Naive thymus-derived CD4-positive, alpha-beta T cell (primary cell): ENCODE measurements at regions of chr16 and their contacts with region 1.

Region 1: DNA sequence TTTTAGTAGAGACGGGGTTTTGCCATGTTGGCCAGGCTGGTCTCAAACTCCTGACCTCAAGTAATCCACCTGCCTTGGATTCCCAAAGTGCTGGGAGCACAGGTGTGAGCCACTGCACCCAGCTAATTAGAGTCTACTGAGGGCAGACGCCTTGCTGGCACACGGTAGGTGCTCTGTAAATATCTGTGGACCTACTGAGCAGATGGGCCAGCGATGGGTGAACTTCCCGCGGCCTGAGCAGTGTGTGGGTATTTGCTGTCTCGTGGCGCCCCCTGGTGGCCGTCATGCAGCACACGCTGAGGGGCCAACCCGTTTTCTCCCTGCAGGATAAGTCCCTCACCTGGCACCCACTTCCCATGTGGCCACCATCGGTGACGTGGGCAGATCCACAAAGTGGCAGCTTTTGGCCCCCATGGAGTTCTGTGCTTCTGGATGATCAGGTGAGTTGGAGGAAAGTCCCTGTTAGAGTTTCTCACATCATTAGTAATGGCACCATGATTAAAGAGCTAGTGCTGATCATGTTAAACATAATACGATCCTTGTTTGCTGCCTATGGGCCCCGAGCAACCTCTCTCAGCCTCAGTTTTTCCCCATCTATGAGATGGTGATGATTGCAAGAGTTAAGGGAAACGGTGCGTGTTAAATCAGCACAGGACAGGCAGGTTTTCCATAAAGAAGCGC is 40.7 kb downstream of the ZDHHC7 start:
- DNase-seq: peak; percentile 60 to 79 (median 74)
- ATAC-seq: peak; percentile 92
- H3K4me3 ChIP-seq: no peak overlapping the region
- H3K4me3 Mint-ChIP-seq: no peak overlapping the region
- H3K27ac ChIP-seq: no peak overlapping the region
- H3K27ac Mint-ChIP-seq: peak overlapping the region in 3 of 9 donors; percentile 9 to 78 (median 46)
- H3K4me1 ChIP-seq: peaks cover 0 to 6% of the 10 kb centered on the region in 2 donors
- H3K4me1 Mint-ChIP-seq: peaks cover 0 to 8% (median 4%) of the 10 kb centered on the region in 7 donors
- H3K27me3 ChIP-seq: no peaks in the 10 kb centered on the region
- H3K27me3 Mint-ChIP-seq: no peaks in the 10 kb centered on the region

Region 2: GRCh38 chr16:84277237-84277823 is 693.3 kb before region 1 on chr16:
- CTCF ChIA-PET with region 1: no interaction called
- POLR2A ChIA-PET with region 1: no interaction called
- intact Hi-C with region 1: loop called in 1 of 2 experiments (anchors 1 kb)
- DNase-seq: peak; percentile 27 to 73 (median 58)
- ATAC-seq: peak; percentile 78
- H3K4me3 ChIP-seq: no peak overlapping the region
- H3K4me3 Mint-ChIP-seq: no peak overlapping the region
- H3K27ac ChIP-seq: no peak overlapping the region
- H3K27ac Mint-ChIP-seq: no peak overlapping the region
- H3K4me1 ChIP-seq: no peaks in the 10 kb centered on the region
- H3K4me1 Mint-ChIP-seq: no peaks in the 10 kb centered on the region
- H3K27me3 ChIP-seq: no peaks in the 10 kb centered on the region
- H3K27me3 Mint-ChIP-seq: peaks cover 0 to 10% (median 0%) of the 10 kb centered on the region in 5 donors

Region 3: GRCh38 chr16:84881702-84882521 is 88.7 kb before region 1 on chr16:
- CTCF ChIA-PET with region 1: no interaction called
- POLR2A ChIA-PET with region 1: no interaction called
- intact Hi-C with region 1: no loop called
- DNase-seq: no peak
- ATAC-seq: no peak
- H3K4me3 ChIP-seq: no peak overlapping the region
- H3K4me3 Mint-ChIP-seq: no peak overlapping the region
- H3K27ac ChIP-seq: no peak overlapping the region
- H3K27ac Mint-ChIP-seq: no peak overlapping the region
- H3K4me1 ChIP-seq: peaks cover 0 to 6% of the 10 kb centered on the region in 2 donors
- H3K4me1 Mint-ChIP-seq: peaks cover 0 to 8% (median 4%) of the 10 kb centered on the region in 7 donors
- H3K27me3 ChIP-seq: no peaks in the 10 kb centered on the region
- H3K27me3 Mint-ChIP-seq: peaks cover 0 to 15% (median 0%) of the 10 kb centered on the region in 5 donors

Region 4: DNA sequence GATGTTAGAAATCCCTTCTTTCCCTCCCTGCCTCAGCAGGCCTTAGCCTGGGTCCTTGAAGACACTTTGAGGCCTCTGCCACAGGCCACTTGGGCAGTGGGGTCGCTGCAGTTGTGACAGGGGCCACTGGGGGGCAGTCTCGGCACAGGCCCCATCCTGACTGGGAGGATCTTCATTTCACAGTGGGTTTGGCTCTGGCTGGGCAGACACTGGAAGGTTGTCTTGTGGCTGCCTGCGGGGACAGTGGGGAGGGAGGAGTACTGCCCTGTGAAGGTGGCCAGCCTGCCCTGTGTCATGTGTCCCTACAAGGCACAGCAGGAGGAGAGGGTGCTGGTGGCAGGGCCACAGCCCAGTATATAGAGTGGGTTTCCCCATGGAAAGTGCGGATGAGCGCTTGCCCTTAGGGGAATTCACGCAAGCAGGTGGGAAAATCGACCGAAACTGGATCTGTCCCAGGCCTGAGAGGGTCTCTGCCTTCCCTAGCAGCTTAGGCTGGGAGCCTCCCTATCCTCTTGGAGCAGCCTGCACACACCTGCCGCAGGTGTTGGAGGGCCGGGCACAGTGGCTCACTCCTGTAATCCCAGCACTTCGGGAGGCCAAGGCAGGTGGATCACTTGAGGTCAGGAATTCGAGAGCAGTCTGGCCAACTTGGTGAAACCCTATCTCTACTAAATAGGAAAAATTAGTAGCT is 689.4 kb after region 1 on chr16:
- CTCF ChIA-PET with region 1: no interaction called
- POLR2A ChIA-PET with region 1: no interaction called
- intact Hi-C with region 1: no loop called
- DNase-seq: peak in 8 of 9 donors; percentile 16 to 66 (median 48)
- ATAC-seq: peak; percentile 80
- H3K4me3 ChIP-seq: no peak overlapping the region
- H3K4me3 Mint-ChIP-seq: no peak overlapping the region
- H3K27ac ChIP-seq: no peak overlapping the region
- H3K27ac Mint-ChIP-seq: peak overlapping the region in 1 of 9 donors; percentile 69
- H3K4me1 ChIP-seq: no peaks in the 10 kb centered on the region
- H3K4me1 Mint-ChIP-seq: peaks cover 0 to 4% (median 0%) of the 10 kb centered on the region in 7 donors
- H3K27me3 ChIP-seq: no peaks in the 10 kb centered on the region
- H3K27me3 Mint-ChIP-seq: no peaks in the 10 kb centered on the region